Breast epithelium (tissue), 4 donors: ENCODE measurements at regions of chr22 and their contacts with region 1.

Region 1: GRCh38 chr22:46201059-46201757 is 48.9 kb downstream of the CDPF1 start:
- DNase-seq: peak in 1 of 2 donors; percentile 42
- H3K4me3 ChIP-seq: no peak overlapping the region
- H3K27ac ChIP-seq: peak overlapping the region; percentile 28 to 49
- H3K4me1 ChIP-seq: no peaks in the 10 kb centered on the region
- H3K27me3 ChIP-seq: no peaks in the 10 kb centered on the region
- CTCF ChIP-seq: no peak
- POLR2A ChIP-seq: no peak

Region 2: DNA sequence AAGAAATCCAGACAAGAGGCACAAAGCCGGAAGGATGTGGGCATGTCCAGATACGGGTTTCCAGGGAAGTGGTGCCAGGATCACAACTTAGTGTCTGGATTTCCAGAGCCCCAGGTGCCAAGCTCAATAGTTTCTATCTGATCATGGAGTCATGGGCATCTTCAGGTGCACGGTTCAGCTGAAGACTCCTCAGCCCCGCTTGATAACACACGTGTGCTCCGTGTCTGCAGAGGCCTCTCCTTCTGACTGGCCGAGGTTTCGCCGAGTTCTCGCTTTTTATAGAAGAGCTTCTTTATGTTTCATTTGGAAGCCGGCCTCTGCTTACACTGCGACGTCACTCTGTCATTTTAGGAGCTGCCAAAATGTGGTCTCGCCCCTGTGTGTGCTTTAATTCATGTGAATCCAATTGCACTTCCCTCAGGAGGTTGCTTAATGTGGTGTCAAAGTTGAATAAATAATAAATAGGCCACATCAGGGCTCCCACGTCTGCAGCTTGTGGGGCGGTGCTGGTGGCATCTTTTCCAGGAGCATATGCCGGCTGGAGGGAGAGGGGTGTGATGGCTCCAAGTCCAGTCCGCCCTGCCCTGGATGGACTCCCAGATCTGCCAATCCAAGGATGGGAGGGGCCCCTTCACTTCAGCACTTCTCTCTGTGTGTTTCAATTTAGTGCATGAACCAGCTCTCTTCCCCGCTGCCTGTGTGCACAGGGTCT is 1972.0 kb after region 1 on chr22:
- intact Hi-C with region 1: loop called (anchors 10 kb)
- DNase-seq: no peak
- H3K4me3 ChIP-seq: no peak overlapping the region
- H3K27ac ChIP-seq: no peak overlapping the region
- H3K4me1 ChIP-seq: no peaks in the 10 kb centered on the region
- H3K27me3 ChIP-seq: peaks cover 0 to 50% of the 10 kb centered on the region in 2 donors
- CTCF ChIP-seq: no peak
- POLR2A ChIP-seq: no peak